ENCODE measurements at regions of chr11 and their contacts with region 1.

Region 1: GRCh38 chr11:117907251-117907981 is 21.8 kb downstream of the TMPRSS13 start:
- DNase-seq: peak; percentile 63 to 97 (median 82)

Region 2: DNA sequence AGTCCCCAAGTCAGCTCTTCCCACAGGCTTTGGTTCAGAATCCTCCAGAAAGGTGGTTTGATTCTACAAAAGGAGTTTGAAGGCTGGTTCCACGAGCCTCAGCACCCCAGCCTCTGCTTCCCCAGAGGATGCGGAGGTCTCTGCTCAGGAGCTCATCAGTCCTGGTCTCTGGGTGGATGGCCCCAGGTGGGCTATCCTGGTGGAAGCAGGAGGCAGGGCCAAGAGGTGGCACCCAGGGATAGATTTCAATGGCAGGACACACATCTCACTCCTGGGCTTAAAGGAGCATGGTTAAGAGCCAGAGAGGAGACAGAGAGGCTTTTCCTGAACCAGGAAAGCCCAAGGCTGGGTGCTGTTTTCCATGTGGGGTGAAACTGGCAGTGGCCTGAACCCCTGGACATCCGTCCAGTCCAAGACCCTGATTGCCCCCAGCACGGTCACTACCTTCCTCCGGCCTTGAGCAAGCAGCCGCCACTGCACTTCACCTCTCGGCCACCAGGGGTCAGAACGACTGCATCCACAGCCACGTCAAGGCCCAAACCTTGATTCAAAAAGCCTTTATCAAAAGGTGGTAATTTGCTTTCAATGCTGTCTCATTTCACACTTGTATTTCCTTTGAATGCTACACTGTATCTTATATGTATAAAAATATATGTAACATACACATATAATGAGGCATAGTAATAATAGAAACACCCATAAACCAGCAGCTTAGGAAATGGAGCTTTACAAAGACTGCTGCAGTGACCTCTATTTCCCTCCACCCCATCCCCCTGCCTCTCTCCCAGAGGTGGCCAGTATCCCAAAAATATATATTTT is 63.5 kb before region 1 on chr11:
- intact Hi-C with region 1: loop called (anchors 10 kb)
- DNase-seq: peak; percentile 69 to 96 (median 87)